Right ventricle myocardium inferior (tissue), 1 donor: ENCODE measurements at regions of chr17 and their contacts with region 1.

Region 1: GRCh38 chr17:1002771-1003555 is 6.0 kb downstream of the TIMM22 start:
- DNase-seq: no peak
- ATAC-seq: peak; percentile 23

Region 2: DNA sequence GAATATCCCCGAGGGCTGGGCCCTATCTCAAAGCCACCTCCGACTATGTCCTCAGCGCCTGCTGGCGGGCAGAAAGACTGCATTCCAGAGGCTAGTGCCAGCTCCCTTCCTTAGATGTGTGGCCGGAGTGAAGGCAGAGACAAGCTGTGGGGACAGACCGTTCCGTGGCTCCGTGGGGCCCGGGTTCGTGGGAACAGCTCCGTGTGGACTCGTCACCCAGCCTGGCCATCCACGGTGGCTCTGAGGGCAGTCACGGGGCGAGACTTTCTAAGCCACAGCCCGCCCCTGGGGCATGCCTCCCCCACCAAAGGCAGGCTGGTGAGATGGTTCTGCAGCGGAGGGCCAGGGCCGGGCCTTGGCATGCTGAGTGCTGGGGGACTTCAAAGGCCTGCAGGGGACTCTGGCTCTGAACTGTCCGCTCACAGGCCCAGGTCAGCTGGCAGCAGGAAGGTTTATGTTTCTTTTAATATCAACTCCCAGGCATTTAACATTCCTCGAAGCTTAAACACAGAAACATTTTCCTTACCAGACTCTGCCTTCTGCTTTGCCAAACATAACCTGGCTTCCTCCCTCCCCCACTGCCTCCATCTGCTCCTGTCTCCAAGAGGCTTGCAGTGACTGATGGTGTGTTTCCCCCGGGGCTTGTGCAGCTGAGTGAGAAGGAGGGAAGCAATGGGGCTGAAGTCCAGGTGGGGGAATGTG is 44.4 kb after region 1 on chr17:
- intact Hi-C with region 1: loop called (anchors 2 kb)
- DNase-seq: peak; percentile 80
- ATAC-seq: peak; percentile 82

Region 3: GRCh38 chr17:1108861-1109605 is 106.1 kb after region 1 on chr17:
- intact Hi-C with region 1: loop called (anchors 5 kb)
- DNase-seq: peak; percentile 91
- ATAC-seq: peak; percentile 44